Panc1 (cell line): ENCODE measurements at regions of chr3 and their contacts with region 1.

Region 1: DNA sequence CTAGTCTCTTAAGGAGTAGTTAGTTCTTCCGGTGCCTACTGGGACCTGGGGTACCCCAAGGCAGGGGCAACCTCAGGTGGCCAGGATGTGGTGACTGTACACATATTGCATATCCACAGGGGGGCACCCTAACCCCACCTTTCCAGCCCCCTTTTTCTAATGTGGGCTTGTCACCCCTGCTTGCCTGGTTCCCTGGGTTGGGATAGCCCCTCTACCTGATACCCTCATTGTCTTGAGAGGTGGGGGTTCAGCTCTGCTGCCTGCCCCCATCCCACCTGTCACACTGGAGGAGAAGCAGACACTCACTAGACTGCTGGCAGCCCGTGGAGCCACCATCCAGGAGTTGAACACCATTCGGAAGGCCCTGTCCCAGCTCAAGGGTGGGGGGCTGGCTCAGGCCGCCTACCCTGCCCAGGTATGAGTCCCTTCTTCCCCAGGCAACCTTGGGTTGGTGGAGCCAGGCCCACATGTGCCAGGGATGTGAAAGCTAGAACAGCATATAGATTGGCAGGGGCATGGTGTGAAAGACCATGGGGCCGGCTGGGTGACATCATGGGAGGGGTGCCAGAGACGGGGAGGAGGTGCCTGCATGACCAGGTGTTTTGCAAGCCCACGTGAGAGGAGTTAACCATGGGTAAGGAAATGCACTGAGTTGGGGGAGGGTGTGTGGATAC is 4.0 kb downstream of the GLYCTK start:
- DNase-seq: no peak
- ATAC-seq: no peak
- H3K4me3 ChIP-seq: no peak overlapping the region
- H3K27ac ChIP-seq: no peak overlapping the region
- H3K4me1 ChIP-seq: peaks cover 3% of the 10 kb centered on the region; the same call in 1 of the 2 replicates
- H3K27me3 ChIP-seq: no peaks in the 10 kb centered on the region
- CTCF ChIP-seq: peak; percentile 74

Region 2: DNA sequence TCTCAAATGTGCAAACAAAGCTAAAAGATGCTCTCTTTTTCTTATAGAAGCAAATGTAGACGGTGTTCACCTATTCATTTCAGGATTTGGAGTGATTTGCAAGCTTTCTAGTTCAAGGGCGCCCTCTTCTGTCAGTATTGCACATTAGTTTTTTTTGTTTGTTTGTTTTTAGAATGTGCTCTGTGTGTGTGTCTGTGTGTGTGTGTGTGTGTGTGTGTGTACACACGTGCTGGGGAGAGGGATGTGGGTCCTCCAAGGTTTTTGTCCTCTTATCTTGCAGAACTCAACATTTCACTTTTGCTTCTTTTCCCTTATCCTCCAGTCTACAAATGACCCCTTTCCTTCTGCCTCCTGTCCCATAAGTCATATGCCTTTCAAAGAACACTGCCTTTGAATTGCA is 48.0 kb after region 1 on chr3:
- CTCF ChIA-PET with region 1: interaction called, 3 read pairs
- POLR2A ChIA-PET with region 1: no interaction called
- in situ Hi-C with region 1: no loop called
- intact Hi-C with region 1: loop called (anchors 2 kb)
- DNase-seq: peak; percentile 45
- ATAC-seq: peak; percentile 56
- H3K4me3 ChIP-seq: no peak overlapping the region
- H3K27ac ChIP-seq: no peak overlapping the region
- H3K4me1 ChIP-seq: no peaks in the 10 kb centered on the region
- H3K27me3 ChIP-seq: no peaks in the 10 kb centered on the region
- CTCF ChIP-seq: peak; percentile 73

Region 3: DNA sequence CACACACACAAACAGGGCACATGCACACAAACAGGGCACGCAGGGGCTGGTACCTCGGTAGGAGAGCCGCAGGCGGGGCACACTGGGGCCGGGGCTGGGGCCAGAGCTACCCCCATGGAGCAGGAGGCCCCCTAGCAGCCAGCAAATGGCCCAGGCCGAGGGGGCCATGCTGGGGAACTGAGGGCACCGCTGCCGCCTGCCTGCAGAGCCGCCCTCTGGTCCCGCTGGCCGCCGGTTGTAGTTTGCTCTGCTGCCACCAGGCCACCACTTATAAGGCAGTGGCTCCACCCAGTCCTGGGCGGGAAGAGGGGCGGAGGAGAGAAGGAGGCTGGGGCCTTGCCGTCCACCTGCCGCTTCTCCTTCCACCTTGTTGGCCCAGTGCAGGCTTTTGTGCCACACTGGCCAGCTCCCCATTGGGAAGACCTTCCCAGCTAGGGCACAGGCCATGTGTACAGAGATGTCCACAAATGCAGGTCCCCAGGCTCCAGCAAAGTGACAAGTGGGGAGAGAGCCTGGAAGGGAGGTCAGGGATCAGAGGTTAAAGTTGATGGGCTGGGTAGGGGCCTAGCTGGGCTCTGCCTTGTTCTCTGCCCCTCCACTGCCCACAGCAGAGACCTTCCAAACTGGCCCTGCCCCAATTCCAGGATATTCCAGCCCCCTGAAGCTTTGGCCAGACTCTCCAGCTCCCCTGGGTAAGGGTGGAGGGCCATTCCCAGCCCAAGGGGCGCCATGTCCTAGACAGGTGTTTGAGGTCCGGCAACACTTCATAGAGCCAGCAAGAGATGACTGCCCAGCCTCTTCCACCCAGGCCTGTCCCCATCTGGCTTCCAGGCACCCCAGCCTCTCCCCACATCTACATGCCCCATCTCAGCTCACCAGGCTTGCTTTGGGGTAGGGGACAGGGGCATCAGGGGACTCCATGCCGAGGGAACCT is 153.5 kb after region 1 on chr3 and contains the start of gene SEMA3G:
- CTCF ChIA-PET with region 1: no interaction called
- POLR2A ChIA-PET with region 1: no interaction called
- in situ Hi-C with region 1: no loop called
- intact Hi-C with region 1: loop called (anchors 5 kb)
- DNase-seq: no peak
- ATAC-seq: peak; percentile 89
- H3K4me3 ChIP-seq: no peak within 1 kb of the TSS
- H3K27ac ChIP-seq: no peak within 1 kb of the TSS
- H3K4me1 ChIP-seq: peaks cover 5% of the 10 kb centered on the region; the same call in 1 of the 2 replicates
- H3K27me3 ChIP-seq: no peaks in the 10 kb centered on the region
- CTCF ChIP-seq: no peak
- total RNA-seq, gene SEMA3G: 1.6 TPM